Activated B cell treated with CpG ODN at 0.5 μM for 24 hours (primary cell): ENCODE measurements at regions of chr17 and their contacts with region 1.

Region 1: GRCh38 chr17:60971515-60972369 is 294.1 kb downstream of the BCAS3 start:
- DNase-seq: no peak
- ATAC-seq: no peak
- H3K4me3 Mint-ChIP-seq: no peak overlapping the region
- H3K27ac Mint-ChIP-seq: no peak overlapping the region
- H3K4me1 Mint-ChIP-seq: peaks cover 3% of the 10 kb centered on the region
- H3K27me3 Mint-ChIP-seq: peaks cover 3% of the 10 kb centered on the region
- CTCF ChIP-seq: peak; percentile 31

Region 2: GRCh38 chr17:60676758-60677307 is 294.9 kb before region 1 on chr17:
- CTCF ChIA-PET with region 1: no interaction called
- POLR2A ChIA-PET with region 1: no interaction called
- intact Hi-C with region 1: no loop called
- DNase-seq: no peak
- ATAC-seq: no peak
- H3K4me3 Mint-ChIP-seq: peak overlapping the region; percentile 99
- H3K27ac Mint-ChIP-seq: peak overlapping the region; percentile 94
- H3K4me1 Mint-ChIP-seq: peaks cover 23% of the 10 kb centered on the region
- H3K27me3 Mint-ChIP-seq: no peaks in the 10 kb centered on the region
- CTCF ChIP-seq: no peak

Region 3: GRCh38 chr17:61002316-61002736 is 30.6 kb after region 1 on chr17:
- CTCF ChIA-PET with region 1: no interaction called
- POLR2A ChIA-PET with region 1: no interaction called
- intact Hi-C with region 1: no loop called
- DNase-seq: no peak
- ATAC-seq: no peak
- H3K4me3 Mint-ChIP-seq: no peak overlapping the region
- H3K27ac Mint-ChIP-seq: no peak overlapping the region
- H3K4me1 Mint-ChIP-seq: no peaks in the 10 kb centered on the region
- H3K27me3 Mint-ChIP-seq: no peaks in the 10 kb centered on the region
- CTCF ChIP-seq: peak; percentile 35

Region 4: GRCh38 chr17:61064078-61064951 is 92.6 kb after region 1 on chr17:
- CTCF ChIA-PET with region 1: no interaction called
- POLR2A ChIA-PET with region 1: no interaction called
- intact Hi-C with region 1: no loop called
- DNase-seq: no peak
- ATAC-seq: no peak
- H3K4me3 Mint-ChIP-seq: no peak overlapping the region
- H3K27ac Mint-ChIP-seq: no peak overlapping the region
- H3K4me1 Mint-ChIP-seq: peaks cover 7% of the 10 kb centered on the region
- H3K27me3 Mint-ChIP-seq: no peaks in the 10 kb centered on the region
- CTCF ChIP-seq: no peak

Region 5: GRCh38 chr17:61389670-61390478 is 418.1 kb after region 1 on chr17:
- CTCF ChIA-PET with region 1: interaction called, 3 read pairs
- POLR2A ChIA-PET with region 1: no interaction called
- intact Hi-C with region 1: loop called (anchors 2 kb)
- DNase-seq: no peak
- ATAC-seq: peak; percentile 34
- H3K4me3 Mint-ChIP-seq: no peak overlapping the region
- H3K27ac Mint-ChIP-seq: no peak overlapping the region
- H3K4me1 Mint-ChIP-seq: peaks cover 2% of the 10 kb centered on the region
- H3K27me3 Mint-ChIP-seq: peaks cover 19% of the 10 kb centered on the region
- CTCF ChIP-seq: no peak

Region 6: DNA sequence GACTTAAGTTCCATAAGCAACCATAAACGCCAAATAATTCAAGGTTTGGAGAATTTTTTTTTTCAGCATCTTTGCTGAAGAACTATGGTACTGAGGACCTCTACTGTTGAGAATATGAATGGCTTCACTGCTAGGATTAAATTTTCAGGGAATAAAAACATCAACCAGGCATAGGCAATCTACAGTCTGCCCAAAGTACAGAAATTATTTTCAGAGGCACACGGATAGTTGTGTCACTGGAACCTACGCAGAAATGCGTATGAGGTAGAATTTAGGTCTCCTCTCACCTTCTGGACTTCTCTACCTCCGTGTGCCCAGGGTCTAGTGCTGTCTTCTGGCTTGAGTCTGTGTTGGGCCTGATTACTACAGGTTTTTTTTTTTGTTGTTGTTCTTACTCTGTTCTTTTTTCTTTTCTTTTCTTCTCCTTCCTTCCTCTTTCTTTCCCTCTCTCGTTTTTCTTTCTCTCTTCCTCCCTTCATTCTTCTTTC is 579.6 kb after region 1 on chr17:
- CTCF ChIA-PET with region 1: no interaction called
- POLR2A ChIA-PET with region 1: no interaction called
- intact Hi-C with region 1: loop called (anchors 2 kb)
- DNase-seq: no peak
- ATAC-seq: no peak
- H3K4me3 Mint-ChIP-seq: no peak overlapping the region
- H3K27ac Mint-ChIP-seq: no peak overlapping the region
- H3K4me1 Mint-ChIP-seq: no peaks in the 10 kb centered on the region
- H3K27me3 Mint-ChIP-seq: peaks cover 24% of the 10 kb centered on the region
- CTCF ChIP-seq: no peak